Sigmoid colon (tissue), 7 donors: ENCODE measurements at regions of chr1 and their contacts with region 1.

Region 1: DNA sequence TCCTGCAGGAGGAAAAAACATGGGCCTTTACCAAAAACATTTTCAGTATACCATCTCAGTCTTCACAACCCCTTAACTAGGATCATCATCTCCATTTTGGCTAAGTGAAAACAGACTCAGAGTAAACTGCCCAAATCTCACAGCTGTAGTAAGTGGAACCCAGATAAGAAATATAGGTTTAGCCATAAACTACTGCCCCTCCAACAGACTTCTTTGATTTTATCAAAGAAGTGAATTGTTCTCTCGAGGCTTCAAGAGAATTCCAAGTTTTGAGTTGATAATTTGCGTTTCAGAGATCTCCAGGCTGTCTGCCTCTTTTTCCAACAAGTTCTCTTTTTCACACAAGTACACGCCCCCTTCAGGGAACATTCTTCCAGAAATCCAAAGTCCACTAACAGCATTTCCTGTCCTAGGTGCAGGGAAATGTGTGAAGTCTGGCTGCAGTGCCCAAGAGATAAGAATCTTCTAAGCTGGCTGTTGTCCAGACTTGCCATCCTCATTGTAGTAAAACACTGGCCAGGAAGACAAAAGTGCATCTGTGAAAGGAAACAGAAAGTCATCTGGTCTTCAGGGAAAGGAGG is 30.8 kb downstream of the RNF19B start:
- DNase-seq: no peak
- H3K4me3 ChIP-seq: no peak overlapping the region
- H3K27ac ChIP-seq: peak overlapping the region; percentile 10 to 60 (median 53)
- H3K4me1 ChIP-seq: peaks cover 0 to 8% (median 3%) of the 10 kb centered on the region in 4 donors
- H3K27me3 ChIP-seq: no peaks in the 10 kb centered on the region
- CTCF ChIP-seq: peak in 1 of 4 experiments; percentile 7
- EP300 ChIP-seq: no peak
- POLR2A ChIP-seq: no peak

Region 2: DNA sequence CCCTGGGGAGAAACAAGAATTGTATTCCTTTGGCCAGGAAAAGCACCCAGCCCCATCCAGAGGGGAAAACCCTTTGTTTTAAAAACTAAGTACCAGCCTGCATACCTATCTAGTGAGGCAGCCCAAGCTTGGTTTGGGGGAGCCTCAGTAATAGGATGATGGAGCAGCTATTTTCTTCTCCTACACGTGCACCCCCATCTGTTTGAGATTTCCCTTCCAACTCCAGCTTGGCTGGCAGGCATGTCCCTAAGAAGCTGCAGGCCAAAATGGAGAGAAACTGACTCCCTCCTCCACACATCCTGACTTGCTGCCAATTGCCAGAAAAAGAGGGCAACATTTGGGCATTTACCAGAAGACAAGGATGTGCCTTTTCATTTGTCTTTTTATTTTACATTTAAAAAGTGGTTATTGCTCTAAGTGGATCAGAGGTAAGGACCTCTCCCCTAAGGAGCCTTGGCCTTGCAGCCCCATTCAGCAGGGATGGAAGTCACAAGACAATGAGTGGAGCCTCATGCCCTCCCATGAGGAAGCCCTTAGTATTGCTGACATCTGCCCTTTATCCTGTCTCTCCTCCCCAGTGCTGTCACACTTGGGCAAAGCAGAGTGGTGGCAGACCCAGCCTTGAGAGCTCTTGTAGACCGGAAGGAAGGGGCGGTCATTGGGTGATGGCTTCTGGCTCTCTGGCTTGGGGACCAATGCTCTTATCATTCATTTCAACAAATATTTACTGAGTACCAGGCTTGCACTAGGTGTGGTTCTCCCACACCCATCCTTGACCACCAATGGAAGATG is 71.7 kb before region 1 on chr1:
- intact Hi-C with region 1: no loop called
- DNase-seq: no peak
- H3K4me3 ChIP-seq: no peak overlapping the region
- H3K27ac ChIP-seq: no peak overlapping the region
- H3K4me1 ChIP-seq: peaks cover 0 to 14% (median 7%) of the 10 kb centered on the region in 4 donors
- H3K27me3 ChIP-seq: no peaks in the 10 kb centered on the region
- CTCF ChIP-seq: no peak
- EP300 ChIP-seq: no peak
- POLR2A ChIP-seq: no peak

Region 3: GRCh38 chr1:32981003-32981901 is 47.4 kb after region 1 on chr1:
- intact Hi-C with region 1: no loop called
- DNase-seq: no peak
- H3K4me3 ChIP-seq: no peak overlapping the region
- H3K27ac ChIP-seq: peak overlapping the region; percentile 13 to 58 (median 28)
- H3K4me1 ChIP-seq: peaks cover 0 to 5% (median 2%) of the 10 kb centered on the region in 4 donors
- H3K27me3 ChIP-seq: no peaks in the 10 kb centered on the region
- CTCF ChIP-seq: no peak
- EP300 ChIP-seq: no peak
- POLR2A ChIP-seq: peak in 1 of 2 donors; percentile 17

Region 4: DNA sequence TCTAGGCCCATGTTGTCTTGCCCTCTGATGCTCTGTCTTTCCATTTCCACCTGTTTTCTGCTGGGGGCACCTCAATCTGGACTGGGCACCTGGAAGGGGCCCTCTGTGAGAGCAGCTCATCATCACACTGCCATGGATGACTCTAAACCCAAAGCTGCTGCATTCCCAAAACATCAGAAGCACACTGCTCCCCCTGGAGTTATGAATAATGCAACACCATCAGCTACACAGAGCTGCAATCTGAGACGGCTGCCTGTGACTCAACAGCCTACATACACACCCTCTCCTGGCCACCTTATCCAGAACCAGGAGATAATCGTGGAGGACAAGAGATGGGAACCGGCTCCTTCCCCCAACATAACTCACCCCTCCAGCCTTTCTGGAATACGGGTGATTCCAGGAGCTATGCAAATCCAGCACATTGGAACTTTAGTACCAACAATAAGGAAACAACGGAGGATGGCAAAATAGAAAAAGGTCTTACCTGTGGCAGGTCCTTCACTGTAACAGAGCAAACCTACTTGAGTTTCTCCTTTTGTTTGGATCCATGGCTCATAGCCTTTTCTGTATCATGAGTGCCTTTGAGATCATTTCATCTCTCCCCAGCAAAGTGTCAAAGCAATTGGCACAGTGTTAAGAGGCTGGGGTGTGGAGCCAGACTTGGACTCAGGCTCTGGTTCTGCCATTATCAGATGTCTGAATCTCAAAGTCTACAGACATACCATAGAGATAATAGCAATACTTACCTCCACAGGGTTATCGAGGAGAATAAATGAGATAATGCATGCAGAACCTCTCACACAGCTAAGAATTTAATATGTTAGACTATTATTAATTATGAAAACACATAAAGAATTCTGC is 73.6 kb after region 1 on chr1:
- intact Hi-C with region 1: loop called (anchors 5 kb)
- DNase-seq: no peak
- H3K4me3 ChIP-seq: no peak overlapping the region
- H3K27ac ChIP-seq: no peak overlapping the region
- H3K4me1 ChIP-seq: peaks cover 0 to 42% (median 26%) of the 10 kb centered on the region in 4 donors
- H3K27me3 ChIP-seq: no peaks in the 10 kb centered on the region
- CTCF ChIP-seq: peak in 2 of 4 experiments; percentile 20 to 25
- EP300 ChIP-seq: no peak
- POLR2A ChIP-seq: no peak

Region 5: DNA sequence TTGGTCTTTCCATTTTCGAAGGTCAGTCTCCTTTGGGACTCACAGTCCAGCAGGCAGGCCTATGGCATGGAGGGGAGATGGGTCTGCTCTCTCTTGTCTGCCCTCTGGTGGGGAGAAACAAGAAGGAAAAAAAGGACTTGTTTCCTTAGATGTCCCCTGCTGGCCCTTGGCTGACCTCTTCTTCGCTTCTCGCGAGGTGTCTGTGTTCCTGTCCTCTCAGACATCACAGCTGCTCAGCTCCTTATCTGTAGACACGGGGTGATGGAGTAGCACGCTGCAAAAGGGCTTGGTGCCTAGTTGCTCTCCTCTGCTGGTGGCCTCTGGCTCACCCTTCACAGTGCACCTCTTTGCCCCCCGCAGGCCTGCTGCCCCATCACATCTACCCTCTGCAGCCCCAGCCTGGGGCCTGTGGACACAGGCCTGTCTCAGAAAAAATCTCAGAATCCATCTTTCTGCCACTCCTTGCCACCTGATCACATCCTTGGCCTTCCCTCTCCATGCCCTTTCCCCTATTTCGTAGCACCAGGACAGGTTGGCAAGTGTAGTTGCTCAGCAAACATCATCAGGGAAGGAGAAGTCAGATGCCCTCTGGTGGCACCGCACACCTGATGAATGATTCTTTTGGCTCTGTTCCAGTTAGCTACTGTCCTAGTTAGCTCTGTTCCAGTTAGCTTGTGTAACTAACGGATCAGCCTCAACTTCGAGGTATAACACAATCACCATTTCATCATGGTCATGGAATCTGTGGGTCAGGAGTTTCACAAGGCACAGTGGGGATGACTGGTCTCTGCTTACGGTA is 121.6 kb after region 1 on chr1:
- intact Hi-C with region 1: loop called (anchors 1 kb)
- DNase-seq: peak; percentile 91
- H3K4me3 ChIP-seq: no peak overlapping the region
- H3K27ac ChIP-seq: peak overlapping the region; percentile 39 to 61 (median 50)
- H3K4me1 ChIP-seq: peaks cover 0 to 16% (median 14%) of the 10 kb centered on the region in 4 donors
- H3K27me3 ChIP-seq: no peaks in the 10 kb centered on the region
- CTCF ChIP-seq: peak; percentile 52 to 86 (median 67)
- EP300 ChIP-seq: no peak
- POLR2A ChIP-seq: no peak

Region 6: DNA sequence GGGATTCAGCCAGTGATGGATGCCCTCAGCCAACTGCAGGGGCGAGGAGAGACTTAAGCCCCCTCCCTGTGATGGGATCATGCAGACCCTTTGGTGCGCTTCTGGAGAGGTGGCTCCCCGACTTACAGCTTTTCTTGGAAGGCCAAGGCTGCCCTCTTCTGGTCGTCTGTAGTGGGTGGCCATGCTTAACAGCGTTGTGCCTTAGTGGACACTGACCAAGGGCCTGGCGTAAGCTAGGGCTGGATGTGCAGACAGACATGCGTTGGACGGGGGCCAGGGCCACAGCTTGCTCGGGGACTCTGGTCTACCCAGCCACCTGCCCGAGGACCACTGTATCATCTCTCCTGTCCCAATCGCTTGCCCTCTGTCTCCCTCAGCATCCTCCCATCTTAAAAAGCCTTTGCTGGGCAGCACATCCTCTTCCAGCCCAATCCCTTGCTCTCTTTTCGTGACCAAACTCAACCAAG is 152.6 kb after region 1 on chr1:
- intact Hi-C with region 1: loop called (anchors 2 kb)
- DNase-seq: peak; percentile 87
- H3K4me3 ChIP-seq: no peak overlapping the region
- H3K27ac ChIP-seq: no peak overlapping the region
- H3K4me1 ChIP-seq: peaks cover 0 to 10% (median 9%) of the 10 kb centered on the region in 4 donors
- H3K27me3 ChIP-seq: no peaks in the 10 kb centered on the region
- CTCF ChIP-seq: peak; percentile 31 to 78 (median 62)
- EP300 ChIP-seq: no peak
- POLR2A ChIP-seq: no peak

Region 7: GRCh38 chr1:33111970-33112369 is 178.1 kb after region 1 on chr1:
- intact Hi-C with region 1: no loop called
- DNase-seq: no peak
- H3K4me3 ChIP-seq: no peak overlapping the region
- H3K27ac ChIP-seq: no peak overlapping the region
- H3K4me1 ChIP-seq: no peaks in the 10 kb centered on the region
- H3K27me3 ChIP-seq: no peaks in the 10 kb centered on the region
- CTCF ChIP-seq: no peak
- EP300 ChIP-seq: no peak
- POLR2A ChIP-seq: no peak